BJ (cell line): ENCODE measurements at regions of chr5 and their contacts with region 1.

Region 1: DNA sequence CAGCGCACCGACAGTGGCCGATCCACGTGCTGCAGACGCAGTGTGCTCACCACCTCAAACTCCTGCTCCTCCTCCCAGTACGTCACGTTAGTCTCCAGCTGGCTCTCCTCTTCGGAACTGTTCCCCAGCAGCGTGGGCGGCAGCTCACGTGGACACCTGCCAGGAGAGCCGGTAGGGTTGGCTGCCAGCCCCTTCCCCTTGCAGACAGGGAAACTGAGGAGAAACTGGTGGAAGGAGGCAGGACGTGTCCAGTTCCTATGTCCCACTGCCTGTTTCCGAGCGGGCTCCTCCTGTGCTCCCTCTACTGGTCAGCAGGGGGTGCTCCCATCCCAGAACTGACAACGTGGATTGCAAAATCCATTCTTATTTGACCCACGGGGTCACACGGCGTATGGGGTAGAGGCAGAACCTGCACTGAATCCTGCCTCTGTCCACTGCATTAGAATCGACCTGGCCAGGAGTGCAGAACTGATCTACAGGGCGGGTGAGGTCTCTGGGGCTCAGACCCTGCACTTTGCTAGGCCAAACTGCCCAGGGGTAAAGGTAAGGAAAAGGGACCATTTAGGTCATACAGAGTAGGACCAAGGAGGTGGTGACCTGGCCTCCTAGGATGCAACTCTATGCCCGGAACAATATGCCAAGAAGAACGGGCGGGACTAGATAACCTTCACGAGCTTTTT is 25.7 kb downstream of the PDGFRB start:
- DNase-seq: no peak
- H3K4me3 ChIP-seq: no peak overlapping the region
- H3K27me3 ChIP-seq: no peaks in the 10 kb centered on the region
- CTCF ChIP-seq: peak; percentile 94

Region 2: GRCh38 chr5:149824846-149825245 is 305.1 kb before region 1 on chr5:
- CTCF ChIA-PET with region 1: no interaction called
- POLR2A ChIA-PET with region 1: no interaction called
- DNase-seq: no peak
- H3K4me3 ChIP-seq: no peak overlapping the region
- H3K27me3 ChIP-seq: no peaks in the 10 kb centered on the region
- CTCF ChIP-seq: no peak

Region 3: GRCh38 chr5:150105928-150106615 is 23.9 kb before region 1 on chr5:
- CTCF ChIA-PET with region 1: no interaction called
- POLR2A ChIA-PET with region 1: no interaction called
- DNase-seq: no peak
- H3K4me3 ChIP-seq: no peak overlapping the region
- H3K27me3 ChIP-seq: no peaks in the 10 kb centered on the region
- CTCF ChIP-seq: no peak

Region 4: GRCh38 chr5:150175076-150175935 is 45.4 kb after region 1 on chr5:
- CTCF ChIA-PET with region 1: interaction called, 10 read pairs
- POLR2A ChIA-PET with region 1: no interaction called
- DNase-seq: no peak
- H3K4me3 ChIP-seq: no peak overlapping the region
- H3K27me3 ChIP-seq: 0 out of 2 replicates have a peak, but pooled peaks cover 2% of the 10 kb centered on the region
- CTCF ChIP-seq: peak; percentile 68

Region 5: GRCh38 chr5:150217873-150218692 is 88.1 kb after region 1 on chr5:
- CTCF ChIA-PET with region 1: interaction called, 26 read pairs
- POLR2A ChIA-PET with region 1: no interaction called
- DNase-seq: no peak
- H3K4me3 ChIP-seq: no peak overlapping the region
- H3K27me3 ChIP-seq: peaks cover 1% of the 10 kb centered on the region; the same call in 1 of the 2 replicates
- CTCF ChIP-seq: peak; percentile 77